HEK293 (cell line): ENCODE measurements at regions of chr4 and their contacts with region 1.

Region 1: DNA sequence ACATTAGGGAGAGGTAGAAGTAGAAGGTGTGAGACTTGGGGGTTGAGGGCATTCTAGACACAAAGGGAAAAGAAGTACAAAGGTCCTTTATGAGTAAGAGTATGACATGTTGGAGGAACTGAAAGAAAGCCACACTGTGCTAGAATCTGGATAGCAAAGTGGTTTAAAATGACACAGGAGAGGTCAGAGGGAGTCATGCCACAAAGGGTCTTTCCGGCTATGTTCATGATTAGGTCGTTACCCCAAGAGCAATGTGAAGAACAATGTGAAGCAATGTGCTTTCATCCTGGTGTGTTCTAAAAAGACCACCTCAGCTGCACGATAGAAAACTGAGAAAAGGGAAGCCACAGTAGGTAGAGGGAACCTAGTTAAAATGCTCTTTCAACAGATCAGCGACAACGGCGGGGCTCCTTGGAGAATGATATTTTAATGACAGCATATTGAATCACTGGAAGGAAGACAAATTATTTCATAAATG is 29.2 kb downstream of the SMIM14 start:
- H3K4me3 ChIP-seq: no peak overlapping the region
- H3K27ac ChIP-seq: no peak overlapping the region
- H3K4me1 ChIP-seq: no peaks in the 10 kb centered on the region
- CTCF ChIP-seq: no peak

Region 2: DNA sequence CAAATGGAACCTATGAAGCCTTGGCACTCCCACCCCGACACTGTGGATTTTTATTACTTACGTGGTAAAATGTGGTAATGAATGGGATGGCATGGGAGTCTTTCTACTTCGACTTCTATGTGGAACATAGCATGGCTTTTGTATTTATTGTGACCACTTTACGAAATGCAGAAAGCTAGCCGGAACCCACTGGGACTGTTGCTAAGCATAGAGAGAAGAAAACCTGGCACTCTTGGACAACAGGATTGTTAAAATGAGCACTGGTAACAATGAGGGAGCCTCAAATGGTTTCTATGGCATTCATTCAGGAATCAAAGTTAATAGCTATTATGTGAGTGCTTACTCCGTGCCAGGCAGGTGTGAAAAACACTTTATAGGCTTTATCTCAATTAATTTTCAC is 254.9 kb after region 1 on chr4:
- CTCF ChIA-PET with region 1: no interaction called
- POLR2A ChIA-PET with region 1: no interaction called
- H3K4me3 ChIP-seq: no peak overlapping the region
- H3K27ac ChIP-seq: no peak overlapping the region
- H3K4me1 ChIP-seq: no peaks in the 10 kb centered on the region
- CTCF ChIP-seq: no peak

Region 3: DNA sequence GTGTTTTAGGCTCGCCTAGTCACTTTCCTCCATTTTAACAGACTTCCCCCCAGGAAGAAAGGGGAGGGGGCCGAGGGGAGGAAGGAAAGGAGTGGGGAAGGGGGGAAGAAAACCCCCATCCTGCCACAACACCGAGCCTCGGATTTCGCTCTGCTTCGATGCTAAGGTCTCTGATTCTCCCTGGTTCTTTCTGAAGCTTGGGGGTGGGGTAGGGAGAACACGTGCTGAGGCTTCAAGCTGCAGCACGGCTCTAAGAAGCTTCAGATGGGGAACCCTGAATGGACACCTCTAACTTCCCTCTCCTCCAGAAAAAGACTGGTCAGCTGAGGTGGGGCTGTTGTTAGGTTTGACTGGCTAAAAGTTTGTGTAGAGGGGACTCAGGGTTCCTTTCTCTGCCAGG is 649.1 kb after region 1 on chr4:
- CTCF ChIA-PET with region 1: no interaction called
- POLR2A ChIA-PET with region 1: interaction called, 10 read pairs
- H3K4me3 ChIP-seq: no peak overlapping the region
- H3K27ac ChIP-seq: no peak overlapping the region
- H3K4me1 ChIP-seq: no peaks in the 10 kb centered on the region
- CTCF ChIP-seq: no peak